Stomach (tissue), 19 donors: ENCODE measurements at regions of chr6 and their contacts with region 1.

Region 1: DNA sequence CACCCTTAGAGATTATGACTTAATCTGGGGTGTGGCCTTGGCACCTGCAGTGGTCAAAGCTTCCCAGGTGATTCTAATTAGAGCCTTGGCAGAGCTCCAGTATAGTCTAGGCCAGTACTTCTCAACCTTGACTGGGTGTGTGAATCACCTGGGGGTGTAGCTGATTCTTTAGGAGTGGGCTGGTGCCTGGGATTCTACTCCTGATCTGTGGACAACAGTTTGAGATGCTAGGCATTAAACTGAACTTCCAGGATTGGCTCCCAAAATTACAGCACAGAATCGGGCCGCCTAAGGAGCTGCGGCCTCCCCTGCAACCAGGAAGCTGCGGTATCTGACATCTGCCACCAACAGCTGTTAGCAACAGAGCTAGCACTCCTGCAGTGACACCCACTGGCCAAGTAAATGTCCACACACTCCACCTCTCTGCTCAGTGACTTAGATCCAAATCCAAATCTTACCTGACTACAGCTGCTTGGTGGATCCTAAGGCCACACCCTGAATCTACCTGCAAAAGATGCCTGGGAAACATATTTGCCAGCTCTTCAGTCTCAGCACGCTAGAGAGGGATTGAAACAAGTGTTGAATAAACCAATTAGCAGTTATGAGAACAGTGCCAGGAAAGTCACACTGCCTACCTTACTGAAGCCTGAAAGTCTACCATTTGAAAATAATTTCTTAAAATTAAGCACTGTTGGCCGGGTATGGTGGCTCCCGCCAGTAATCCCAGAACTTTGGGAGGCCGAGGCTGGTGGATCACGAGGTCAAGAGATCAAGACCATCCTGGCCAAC is 126.7 kb downstream of the UNC5CL start:
- DNase-seq: peak; percentile 68 to 90
- H3K4me3 ChIP-seq: no peak overlapping the region
- H3K27ac ChIP-seq: peak overlapping the region in 2 of 5 donors; percentile 37 to 51
- H3K4me1 ChIP-seq: peaks cover 0 to 10% (median 6%) of the 10 kb centered on the region in 4 donors
- H3K27me3 ChIP-seq: no peaks in the 10 kb centered on the region
- CTCF ChIP-seq: peak in 5 of 7 experiments; percentile 19 to 64 (median 46)
- EP300 ChIP-seq: no peak
- POLR2A ChIP-seq: no peak

Region 2: GRCh38 chr6:41027799-41028628 is 115.7 kb after region 1 on chr6:
- intact Hi-C with region 1: loop called (anchors 10 kb)
- DNase-seq: peak; percentile 92 to 94
- H3K4me3 ChIP-seq: peak overlapping the region; percentile 45 to 48 (median 47)
- H3K27ac ChIP-seq: peak overlapping the region; percentile 71 to 88 (median 80)
- H3K4me1 ChIP-seq: peaks cover 15 to 45% (median 29%) of the 10 kb centered on the region in 4 donors
- H3K27me3 ChIP-seq: no peaks in the 10 kb centered on the region
- CTCF ChIP-seq: peak in 6 of 7 experiments; percentile 66 to 99 (median 98)
- EP300 ChIP-seq: no peak
- POLR2A ChIP-seq: no peak

Region 3: GRCh38 chr6:41247288-41247865 is 335.0 kb after region 1 on chr6:
- intact Hi-C with region 1: no loop called
- DNase-seq: no peak
- H3K4me3 ChIP-seq: no peak overlapping the region
- H3K27ac ChIP-seq: no peak overlapping the region
- H3K4me1 ChIP-seq: no peaks in the 10 kb centered on the region
- H3K27me3 ChIP-seq: peaks cover 0 to 6% (median 0%) of the 10 kb centered on the region in 3 donors
- CTCF ChIP-seq: no peak
- EP300 ChIP-seq: no peak
- POLR2A ChIP-seq: no peak